A549 (cell line): ENCODE measurements at regions of chr1 and their contacts with region 1.

Region 1: DNA sequence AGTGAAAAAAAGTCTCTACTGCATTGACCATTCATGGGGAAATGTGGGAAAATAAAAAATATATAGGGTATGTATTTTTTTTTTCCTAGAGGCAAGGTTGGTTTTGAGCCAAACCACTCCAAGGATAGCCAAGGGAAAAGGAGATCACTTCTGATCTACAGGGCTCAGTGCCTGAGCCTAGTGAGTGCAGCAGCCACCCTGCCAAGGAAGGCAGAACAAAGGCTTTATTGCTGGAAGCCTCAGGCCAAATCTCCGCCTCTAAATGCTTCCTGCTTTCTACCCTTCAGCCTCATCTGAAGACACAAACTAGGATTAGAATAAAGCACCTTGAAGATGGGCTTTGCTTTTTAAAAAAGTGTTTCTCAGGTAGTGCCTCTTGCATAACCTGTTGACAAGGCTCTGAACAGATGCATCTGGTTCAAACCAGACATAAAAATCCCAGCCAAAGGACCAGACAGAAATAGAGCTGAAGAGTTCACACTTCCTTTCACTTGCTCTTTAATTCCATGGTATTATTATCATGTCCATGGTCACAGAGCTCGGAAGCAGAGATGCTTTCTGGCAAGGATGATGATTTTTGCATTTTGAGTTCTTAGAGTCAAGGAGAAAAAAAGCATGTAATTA is 10.5 kb downstream of the C1orf115 start:
- DNase-seq: no peak
- ATAC-seq: no peak
- H3K4me3 ChIP-seq: no peak overlapping the region
- H3K27ac ChIP-seq: no peak overlapping the region
- H3K4me1 ChIP-seq: peaks cover 9% of the 10 kb centered on the region
- CTCF ChIP-seq: no peak
- EP300 ChIP-seq: no peak
- POLR2A ChIP-seq: no peak
- RAD21 ChIP-seq: no peak

Region 2: DNA sequence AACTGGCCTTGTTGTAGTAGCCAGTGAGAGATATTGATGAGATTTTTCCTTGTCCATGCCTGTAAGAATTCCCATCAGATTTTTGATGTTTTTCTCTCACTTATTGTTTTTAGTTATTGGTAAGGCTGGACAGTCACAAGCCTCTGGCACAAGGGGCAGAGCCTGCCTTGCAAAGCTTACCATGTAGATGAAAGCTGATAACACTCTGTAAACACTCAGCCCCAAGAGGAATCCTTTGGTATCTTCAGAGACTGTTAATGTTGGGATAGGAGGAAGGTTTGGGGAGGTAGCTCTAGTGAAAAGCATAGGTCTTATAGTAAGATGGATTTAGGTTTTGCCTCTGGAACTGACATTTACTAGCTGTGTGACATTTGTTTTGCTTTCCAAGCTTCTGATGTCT is 135.0 kb before region 1 on chr1:
- CTCF ChIA-PET with region 1: no interaction called
- POLR2A ChIA-PET with region 1: no interaction called
- DNase-seq: no peak
- ATAC-seq: no peak
- H3K4me3 ChIP-seq: no peak overlapping the region
- H3K27ac ChIP-seq: no peak overlapping the region
- H3K4me1 ChIP-seq: no peaks in the 10 kb centered on the region
- CTCF ChIP-seq: no peak
- EP300 ChIP-seq: no peak
- POLR2A ChIP-seq: no peak
- RAD21 ChIP-seq: no peak

Region 3: GRCh38 chr1:220690140-220691025 is 10.3 kb before region 1 on chr1 and contains the start of gene C1orf115:
- CTCF ChIA-PET with region 1: interaction called, 20 read pairs
- POLR2A ChIA-PET with region 1: no interaction called
- DNase-seq: peak; percentile 78 to 89
- ATAC-seq: peak; percentile 90 to 96
- H3K4me3 ChIP-seq: peak within 1 kb of the TSS; percentile 85
- H3K27ac ChIP-seq: peak within 1 kb of the TSS; percentile 83 to 93
- H3K4me1 ChIP-seq: no peaks in the 10 kb centered on the region
- CTCF ChIP-seq: peak; percentile 96
- EP300 ChIP-seq: no peak
- POLR2A ChIP-seq: peak; percentile 55
- RAD21 ChIP-seq: peak; percentile 47 to 73
- polyA plus RNA-seq, gene C1orf115: 6.4 and 6.9 TPM in 2 replicates

Region 4: DNA sequence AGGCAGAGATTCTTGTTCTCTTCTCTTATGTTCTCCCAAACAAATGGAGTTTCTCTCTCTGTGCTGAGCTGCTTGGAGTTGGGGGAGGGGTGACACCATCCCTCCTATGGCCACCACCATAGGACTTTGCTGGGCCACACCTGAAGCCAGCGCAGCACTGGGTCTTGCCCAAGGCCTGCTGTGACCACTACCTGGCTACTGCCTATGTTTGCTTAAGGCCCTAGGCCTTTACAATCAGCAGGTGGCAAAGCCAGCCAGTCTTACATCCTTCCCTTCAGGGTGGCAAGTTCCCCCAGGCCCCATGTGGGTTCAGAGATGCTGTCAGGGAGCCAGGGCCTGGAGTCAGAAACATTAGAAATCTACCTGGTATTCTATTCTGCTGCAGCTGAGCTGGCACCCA is 41.2 kb after region 1 on chr1:
- CTCF ChIA-PET with region 1: no interaction called
- POLR2A ChIA-PET with region 1: no interaction called
- DNase-seq: no peak
- ATAC-seq: no peak
- H3K4me3 ChIP-seq: no peak overlapping the region
- H3K27ac ChIP-seq: no peak overlapping the region
- H3K4me1 ChIP-seq: no peaks in the 10 kb centered on the region
- CTCF ChIP-seq: no peak
- EP300 ChIP-seq: no peak
- POLR2A ChIP-seq: no peak
- RAD21 ChIP-seq: no peak